Head of caudate nucleus (tissue), 42 donors: ENCODE measurements at regions of chr2 and their contacts with region 1.

Region 1: DNA sequence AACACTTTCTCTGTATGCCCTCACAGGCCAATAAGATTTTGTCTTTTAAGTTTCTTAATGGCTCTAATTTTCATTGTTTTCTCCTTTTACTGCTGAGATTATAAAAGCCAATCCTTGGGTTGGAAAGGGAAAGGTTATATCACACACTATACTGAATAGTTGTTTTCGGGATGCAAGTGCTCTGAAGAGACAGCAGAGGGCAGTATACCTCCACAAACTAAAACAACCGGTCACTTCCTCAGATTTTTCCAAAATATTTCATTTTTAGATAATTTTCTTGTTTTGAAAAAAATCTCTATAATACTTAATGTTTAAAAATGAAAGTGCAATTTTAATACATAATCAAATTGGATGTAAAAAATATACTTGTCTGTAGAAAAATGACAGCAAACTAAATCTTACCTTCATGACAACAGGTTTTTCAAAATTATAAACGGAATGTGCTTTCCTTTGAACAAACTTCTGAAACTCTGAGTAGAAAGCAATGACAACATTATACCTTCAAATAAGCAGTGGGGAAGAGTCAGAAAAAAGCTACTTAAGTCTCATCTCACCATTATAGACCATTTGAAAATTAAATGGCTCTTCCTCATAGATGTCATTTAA is 82.7 kb downstream of the ORC4 start:
- DNase-seq: peak in 1 of 42 donors; percentile 18

Region 2: GRCh38 chr2:148512501-148512900 is 574.7 kb after region 1 on chr2:
- intact Hi-C with region 1: loop called (anchors 5 kb)
- DNase-seq: no peak